AG04449 (cell line): ENCODE measurements at regions of chr1 and their contacts with region 1.

Region 1: DNA sequence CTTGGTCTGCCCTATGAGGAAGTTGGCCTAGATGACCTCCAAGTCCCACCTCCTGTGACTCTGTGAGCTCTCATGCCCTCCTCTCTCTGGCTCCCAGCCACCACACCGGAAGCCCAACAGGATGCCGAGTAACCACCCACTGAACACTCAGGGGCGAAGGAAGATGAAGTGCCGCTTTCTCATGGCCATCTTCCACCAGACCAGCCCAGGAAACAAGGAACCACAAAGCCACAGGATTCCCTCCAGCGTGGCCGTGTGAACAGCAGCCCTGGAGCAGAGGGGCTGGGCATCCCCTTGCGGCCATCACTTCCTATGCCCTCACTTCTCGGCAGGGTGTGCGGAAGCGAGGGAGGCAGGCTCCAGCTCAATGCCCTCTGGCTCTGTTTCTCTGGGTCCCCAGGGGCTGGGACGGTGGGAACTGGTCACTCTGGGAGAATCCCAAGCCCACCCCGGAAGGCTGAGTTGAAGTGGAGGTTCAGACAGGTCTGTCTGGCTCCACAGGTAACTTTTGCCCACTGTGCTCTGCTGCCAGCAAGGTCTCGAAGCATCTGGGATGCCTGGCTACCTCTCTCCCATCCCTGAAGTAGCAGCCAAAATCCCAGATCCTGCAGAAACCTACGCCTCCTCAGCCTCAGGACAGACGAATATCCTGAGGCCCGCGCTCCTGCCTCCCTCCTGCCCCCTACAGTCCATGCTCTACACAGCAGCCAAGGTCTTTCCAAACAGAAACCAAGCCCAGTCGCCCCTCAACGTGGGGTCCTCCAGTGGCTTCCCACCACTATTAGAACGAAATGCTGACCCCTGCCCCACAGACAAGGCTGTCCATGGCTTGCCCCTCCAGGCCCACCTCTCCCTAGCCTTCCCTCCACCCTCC is 44.2 kb upstream of the ECE1 start:
- DNase-seq: peak; percentile 65
- H3K4me3 ChIP-seq: peak overlapping the region; percentile 50
- CTCF ChIP-seq: peak; percentile 93

Region 2: DNA sequence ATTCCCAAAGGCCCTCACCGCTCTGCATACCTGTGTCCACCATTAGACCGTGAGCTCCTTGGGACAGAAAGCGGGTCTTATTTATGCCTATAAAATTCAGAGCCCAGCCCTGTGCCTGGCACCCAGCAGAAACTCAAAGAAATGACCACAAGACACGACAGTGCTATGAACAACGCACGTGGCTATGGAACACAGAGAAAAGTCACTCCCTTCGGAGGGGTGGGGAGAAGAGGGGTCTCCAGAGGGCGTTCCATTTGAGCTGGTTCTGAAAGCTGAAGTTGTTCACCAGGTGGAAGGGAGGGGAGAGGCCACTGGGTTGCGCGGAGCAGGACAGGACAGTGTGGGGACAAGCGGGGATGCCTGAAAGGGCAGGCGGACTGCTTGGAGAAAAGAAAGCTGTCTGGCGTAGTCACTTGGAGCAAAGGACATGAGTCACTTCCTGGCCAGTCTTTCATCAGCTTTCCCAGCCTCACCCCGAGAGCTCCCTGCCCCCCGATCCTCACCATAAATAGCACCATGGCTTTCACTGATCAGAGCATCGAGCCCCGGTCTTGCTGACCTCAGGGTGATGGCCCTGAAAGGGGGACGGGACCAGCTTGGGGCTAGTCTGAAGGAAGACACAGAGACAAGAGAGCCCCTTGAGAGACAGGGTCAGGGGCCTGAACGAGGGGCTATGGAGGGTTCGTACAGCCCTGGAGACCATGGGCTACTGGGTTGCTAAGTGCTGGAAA is 72.7 kb before region 1 on chr1:
- CTCF ChIA-PET with region 1: interaction called, 163 read pairs
- POLR2A ChIA-PET with region 1: interaction called, 4 read pairs
- DNase-seq: peak; percentile 89
- H3K4me3 ChIP-seq: peak overlapping the region; percentile 15; the same call in 1 of the 2 replicates
- CTCF ChIP-seq: no peak

Region 3: GRCh38 chr1:21302747-21303715 is 31.4 kb before region 1 on chr1:
- CTCF ChIA-PET with region 1: interaction called, 13 read pairs
- POLR2A ChIA-PET with region 1: no interaction called
- DNase-seq: peak; percentile 36
- H3K4me3 ChIP-seq: no peak overlapping the region
- CTCF ChIP-seq: no peak

Region 4: DNA sequence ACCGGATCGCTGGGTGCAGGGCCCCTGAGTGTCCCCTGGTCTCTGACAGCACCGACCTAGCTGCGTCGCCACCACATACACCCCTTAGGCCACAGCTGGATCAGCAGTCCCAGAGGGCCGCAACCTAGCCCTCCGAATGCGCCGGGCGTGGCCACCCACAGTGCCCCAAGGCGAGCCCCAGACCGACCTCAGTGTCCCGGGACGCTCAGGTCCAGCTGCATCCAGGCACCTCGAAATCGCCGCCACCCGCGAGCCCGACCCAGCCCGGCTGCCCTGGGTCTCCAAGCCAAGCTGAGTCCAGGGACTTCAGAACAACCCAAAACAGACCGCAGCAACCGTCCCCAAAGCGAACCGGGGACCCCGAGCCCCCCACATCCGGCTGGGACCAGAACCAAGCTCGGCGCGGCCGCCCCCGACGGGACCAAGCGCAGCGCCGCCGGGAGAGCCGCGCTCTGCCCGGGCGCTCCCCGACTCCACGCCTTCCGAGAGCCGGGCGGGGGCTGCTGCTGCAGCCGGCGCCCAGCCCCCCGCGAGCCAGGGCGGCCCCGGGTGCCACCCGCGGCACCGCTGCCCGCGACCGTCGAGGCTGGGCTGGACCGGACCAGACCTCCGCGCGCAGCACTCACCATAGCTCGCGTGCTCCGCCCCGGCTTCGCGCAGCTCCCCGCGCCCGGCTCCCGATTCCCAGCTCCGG is 10.4 kb after region 1 on chr1:
- CTCF ChIA-PET with region 1: interaction called, 31 read pairs
- POLR2A ChIA-PET with region 1: interaction called, 4 read pairs
- DNase-seq: no peak
- H3K4me3 ChIP-seq: peak overlapping the region; percentile 84
- CTCF ChIP-seq: no peak